ENCODE measurements at regions of chr7 and their contacts with region 1.

Region 1: DNA sequence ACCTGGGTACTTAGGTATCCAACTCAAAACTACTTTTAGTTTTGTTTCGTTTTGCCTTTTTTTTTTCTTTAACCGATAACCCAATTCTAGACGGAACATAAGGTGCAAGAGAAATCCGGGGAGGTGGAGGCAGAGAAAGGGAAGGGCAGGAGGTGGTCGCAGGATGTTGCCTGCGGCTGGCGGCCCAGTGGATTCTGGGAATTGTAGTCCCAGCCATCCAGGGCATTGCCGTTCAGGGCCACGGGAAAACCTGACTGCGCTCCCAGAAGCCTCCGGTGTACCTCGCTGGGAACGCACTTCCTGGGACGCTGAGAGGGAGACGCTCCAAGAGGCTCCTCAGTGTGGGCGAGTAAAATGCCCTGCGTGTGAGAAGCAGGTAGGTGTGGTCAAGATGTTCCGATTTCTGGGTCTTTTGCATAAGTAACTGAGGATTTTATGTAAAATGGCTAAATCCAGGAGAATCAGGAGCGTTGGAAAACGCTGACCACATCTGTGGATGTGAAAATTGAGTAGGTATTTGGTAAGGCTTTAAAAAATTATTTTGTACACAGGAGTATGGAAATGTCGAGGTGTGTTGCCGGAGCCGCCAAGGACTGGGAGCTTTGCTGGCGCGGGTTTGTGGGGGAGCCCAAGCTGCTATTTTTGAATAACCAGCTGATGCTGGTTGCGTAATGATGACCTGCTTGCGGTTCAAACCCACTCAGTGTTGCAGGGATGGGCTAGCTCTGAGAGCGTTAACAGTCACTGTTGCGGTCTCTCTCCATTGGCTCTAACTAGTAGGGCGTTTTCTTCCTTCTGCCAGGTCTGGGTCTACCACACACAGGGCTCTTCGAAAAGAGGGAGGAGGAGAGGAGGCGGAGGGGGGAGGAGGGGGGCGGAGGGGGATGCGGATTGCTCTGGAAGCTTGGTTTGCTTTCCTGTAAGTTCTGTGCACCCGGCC is at the start of gene CLDN12:
- DNase-seq: peak; percentile 95
- H3K4me3 Mint-ChIP-seq: peak within 1 kb of the TSS; percentile 95
- H3K27ac Mint-ChIP-seq: peak within 1 kb of the TSS; percentile 97
- H3K4me1 Mint-ChIP-seq: peaks cover 4% of the 10 kb centered on the region
- H3K27me3 Mint-ChIP-seq: no peaks in the 10 kb centered on the region
- total RNA-seq, gene CLDN12: 14.8 to 15.3 TPM

Region 2: GRCh38 chr7:89002981-89003956 is 1400.2 kb before region 1 on chr7:
- CTCF ChIA-PET with region 1: no interaction called
- intact Hi-C with region 1: loop called (anchors 1 kb)
- DNase-seq: no peak
- H3K4me3 Mint-ChIP-seq: peak overlapping the region; percentile 49
- H3K27ac Mint-ChIP-seq: peak overlapping the region; percentile 79
- H3K4me1 Mint-ChIP-seq: peaks cover 28% of the 10 kb centered on the region
- H3K27me3 Mint-ChIP-seq: peaks cover 2% of the 10 kb centered on the region

Region 3: GRCh38 chr7:90178679-90179278 is 224.7 kb before region 1 on chr7:
- CTCF ChIA-PET with region 1: no interaction called
- intact Hi-C with region 1: loop called (anchors 1 kb)
- DNase-seq: peak; percentile 63
- H3K4me3 Mint-ChIP-seq: peak overlapping the region; percentile 17
- H3K27ac Mint-ChIP-seq: peak overlapping the region; percentile 94
- H3K4me1 Mint-ChIP-seq: peaks cover 35% of the 10 kb centered on the region
- H3K27me3 Mint-ChIP-seq: peaks cover 8% of the 10 kb centered on the region

Region 4: GRCh38 chr7:90346336-90347125 is 56.9 kb before region 1 on chr7 and contains the start of gene GTPBP10:
- CTCF ChIA-PET with region 1: interaction called, 4 read pairs
- intact Hi-C with region 1: loop called (anchors 1 kb)
- DNase-seq: peak; percentile 96
- H3K4me3 Mint-ChIP-seq: peak within 1 kb of the TSS; percentile 94
- H3K27ac Mint-ChIP-seq: peak within 1 kb of the TSS; percentile 96
- H3K4me1 Mint-ChIP-seq: peaks cover 34% of the 10 kb centered on the region
- H3K27me3 Mint-ChIP-seq: no peaks in the 10 kb centered on the region
- total RNA-seq, gene GTPBP10: 35.8 to 39.3 TPM

Region 5: GRCh38 chr7:90483251-90483650 is 79.8 kb after region 1 on chr7:
- CTCF ChIA-PET with region 1: no interaction called
- intact Hi-C with region 1: no loop called
- DNase-seq: no peak
- H3K4me3 Mint-ChIP-seq: no peak overlapping the region
- H3K27ac Mint-ChIP-seq: no peak overlapping the region
- H3K4me1 Mint-ChIP-seq: no peaks in the 10 kb centered on the region
- H3K27me3 Mint-ChIP-seq: peaks cover 6% of the 10 kb centered on the region

Region 6: GRCh38 chr7:90560730-90561129 is 157.3 kb after region 1 on chr7:
- CTCF ChIA-PET with region 1: no interaction called
- intact Hi-C with region 1: no loop called
- DNase-seq: no peak
- H3K4me3 Mint-ChIP-seq: no peak overlapping the region
- H3K27ac Mint-ChIP-seq: no peak overlapping the region
- H3K4me1 Mint-ChIP-seq: no peaks in the 10 kb centered on the region
- H3K27me3 Mint-ChIP-seq: peaks cover 9% of the 10 kb centered on the region

Region 7: DNA sequence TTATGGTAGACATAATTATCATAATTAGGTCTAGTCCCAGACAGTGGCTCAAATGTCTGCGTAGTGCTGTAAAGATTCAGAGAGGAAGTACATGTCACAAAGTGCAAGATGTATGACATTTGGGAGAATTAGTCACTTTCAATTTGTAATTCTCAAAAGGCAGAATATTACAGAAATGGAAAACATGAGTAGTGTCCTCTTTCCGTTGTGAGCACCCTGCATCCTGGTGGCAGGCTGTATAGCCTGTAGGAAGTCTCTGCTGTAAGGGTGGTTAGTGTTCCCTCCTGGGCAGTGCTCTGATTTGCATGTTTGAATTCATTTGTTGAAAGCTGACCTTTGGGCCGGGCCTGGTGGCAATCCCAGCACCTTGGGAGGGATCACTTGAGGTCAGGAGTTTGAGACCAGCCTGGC is 209.6 kb after region 1 on chr7:
- CTCF ChIA-PET with region 1: no interaction called
- intact Hi-C with region 1: loop called (anchors 1 kb)
- DNase-seq: peak; percentile 50
- H3K4me3 Mint-ChIP-seq: no peak overlapping the region
- H3K27ac Mint-ChIP-seq: peak overlapping the region; percentile 70
- H3K4me1 Mint-ChIP-seq: peaks cover 18% of the 10 kb centered on the region
- H3K27me3 Mint-ChIP-seq: peaks cover 14% of the 10 kb centered on the region

Measured in activated naive CD4-positive, alpha-beta T cell treated with anti-CD3 and anti-CD28 coated beads for 36 hours (primary cell).